ENCODE measurements at regions of chr2 and their contacts with region 1.

Region 1: GRCh38 chr2:64019719-64020528 is 696 bp upstream of the VPS54 start:
- DNase-seq: no peak
- ATAC-seq: peak; percentile 7
- H3K4me3 Mint-ChIP-seq: peak overlapping the region; percentile 77
- H3K27ac Mint-ChIP-seq: peak overlapping the region; percentile 93
- H3K4me1 Mint-ChIP-seq: peaks cover 39% of the 10 kb centered on the region
- H3K27me3 Mint-ChIP-seq: no peaks in the 10 kb centered on the region

Region 2: GRCh38 chr2:63992061-63992685 is 27.8 kb before region 1 on chr2:
- CTCF ChIA-PET with region 1: no interaction called
- POLR2A ChIA-PET with region 1: no interaction called
- DNase-seq: no peak
- ATAC-seq: no peak
- H3K4me3 Mint-ChIP-seq: no peak overlapping the region
- H3K27ac Mint-ChIP-seq: no peak overlapping the region
- H3K4me1 Mint-ChIP-seq: peaks cover 10% of the 10 kb centered on the region
- H3K27me3 Mint-ChIP-seq: no peaks in the 10 kb centered on the region

Region 3: GRCh38 chr2:64036034-64036705 is 16.2 kb after region 1 on chr2:
- CTCF ChIA-PET with region 1: interaction called, 12 read pairs
- POLR2A ChIA-PET with region 1: no interaction called
- DNase-seq: peak; percentile 57
- ATAC-seq: peak; percentile 98
- H3K4me3 Mint-ChIP-seq: peak overlapping the region; percentile 19
- H3K27ac Mint-ChIP-seq: peak overlapping the region; percentile 79
- H3K4me1 Mint-ChIP-seq: peaks cover 37% of the 10 kb centered on the region
- H3K27me3 Mint-ChIP-seq: no peaks in the 10 kb centered on the region

Region 4: DNA sequence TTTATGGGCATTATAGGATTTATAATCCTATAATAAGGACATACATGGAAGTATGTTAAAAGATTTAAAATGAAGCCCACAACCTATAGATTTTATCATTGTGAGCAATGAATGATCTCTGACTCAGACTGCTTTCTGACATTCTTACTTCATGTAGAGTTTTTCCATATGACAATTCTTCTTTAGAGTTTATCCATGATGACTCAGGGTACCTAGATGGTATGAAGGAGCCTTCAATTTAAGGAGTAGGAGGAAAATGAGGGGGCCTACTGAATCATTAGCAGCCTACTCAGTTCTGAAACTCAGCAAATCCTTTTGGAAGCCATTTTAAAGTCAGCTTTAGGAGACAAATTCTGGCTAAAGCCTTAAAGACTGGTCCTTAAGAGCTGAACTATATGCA is 113.9 kb after region 1 on chr2:
- CTCF ChIA-PET with region 1: no interaction called
- POLR2A ChIA-PET with region 1: no interaction called
- DNase-seq: no peak
- ATAC-seq: no peak
- H3K4me3 Mint-ChIP-seq: no peak overlapping the region
- H3K27ac Mint-ChIP-seq: no peak overlapping the region
- H3K4me1 Mint-ChIP-seq: peaks cover 55% of the 10 kb centered on the region
- H3K27me3 Mint-ChIP-seq: no peaks in the 10 kb centered on the region

Region 5: GRCh38 chr2:64453770-64454385 is 434.0 kb after region 1 on chr2 and contains the start of gene LGALSL:
- CTCF ChIA-PET with region 1: no interaction called
- POLR2A ChIA-PET with region 1: no interaction called
- DNase-seq: peak; percentile 45
- ATAC-seq: peak; percentile 76
- H3K4me3 Mint-ChIP-seq: peak within 1 kb of the TSS; percentile 77
- H3K27ac Mint-ChIP-seq: peak within 1 kb of the TSS; percentile 16
- H3K4me1 Mint-ChIP-seq: peaks cover 12% of the 10 kb centered on the region
- H3K27me3 Mint-ChIP-seq: peaks cover 20% of the 10 kb centered on the region
- total RNA-seq, gene LGALSL: 0.73 to 1.1 TPM